GM10248 (cell line): ENCODE measurements at regions of chr12 and their contacts with region 1.

Region 1: DNA sequence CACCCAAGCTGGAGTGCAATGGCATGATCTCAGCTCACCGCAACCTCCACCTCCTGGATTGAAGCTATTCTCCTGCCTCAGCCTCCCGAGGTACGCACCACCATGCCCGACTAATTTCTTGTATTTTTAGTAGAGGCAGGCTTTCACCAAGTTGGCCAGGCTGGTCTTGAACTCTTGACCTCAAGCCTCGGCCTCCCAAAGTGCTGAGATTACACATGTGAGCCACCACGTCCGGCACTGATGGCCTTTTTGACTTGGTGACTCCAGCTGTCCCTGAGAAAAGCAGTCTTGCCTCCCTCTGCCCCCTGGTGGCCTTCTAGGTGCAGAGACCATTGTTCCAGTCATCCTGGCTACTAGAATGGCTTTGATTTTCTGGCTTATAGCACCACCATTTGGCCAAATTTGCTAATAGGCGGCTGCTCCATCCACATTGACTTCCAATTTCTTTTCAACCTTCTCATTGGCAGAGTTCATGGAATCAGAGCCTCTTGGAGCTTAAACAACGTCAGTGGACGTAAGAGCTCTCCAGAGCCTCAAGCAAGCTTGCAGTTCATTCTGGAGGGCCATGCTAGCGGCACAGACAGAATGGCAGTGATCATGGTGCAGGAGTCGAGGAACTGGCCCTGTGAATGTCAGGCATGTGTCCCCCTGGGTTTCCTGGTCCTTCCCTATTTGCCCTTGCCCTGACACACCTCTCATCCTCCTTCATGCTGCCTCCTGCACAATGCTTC is 25.4 kb upstream of the EIF4B start:
- DNase-seq: peak; percentile 84
- CTCF ChIP-seq: peak; percentile 98

Region 2: GRCh38 chr12:52156736-52157565 is 823.9 kb before region 1 on chr12:
- CTCF ChIA-PET with region 1: interaction called, 13 read pairs
- POLR2A ChIA-PET with region 1: no interaction called
- DNase-seq: peak; percentile 78
- CTCF ChIP-seq: peak; percentile 98

Region 3: DNA sequence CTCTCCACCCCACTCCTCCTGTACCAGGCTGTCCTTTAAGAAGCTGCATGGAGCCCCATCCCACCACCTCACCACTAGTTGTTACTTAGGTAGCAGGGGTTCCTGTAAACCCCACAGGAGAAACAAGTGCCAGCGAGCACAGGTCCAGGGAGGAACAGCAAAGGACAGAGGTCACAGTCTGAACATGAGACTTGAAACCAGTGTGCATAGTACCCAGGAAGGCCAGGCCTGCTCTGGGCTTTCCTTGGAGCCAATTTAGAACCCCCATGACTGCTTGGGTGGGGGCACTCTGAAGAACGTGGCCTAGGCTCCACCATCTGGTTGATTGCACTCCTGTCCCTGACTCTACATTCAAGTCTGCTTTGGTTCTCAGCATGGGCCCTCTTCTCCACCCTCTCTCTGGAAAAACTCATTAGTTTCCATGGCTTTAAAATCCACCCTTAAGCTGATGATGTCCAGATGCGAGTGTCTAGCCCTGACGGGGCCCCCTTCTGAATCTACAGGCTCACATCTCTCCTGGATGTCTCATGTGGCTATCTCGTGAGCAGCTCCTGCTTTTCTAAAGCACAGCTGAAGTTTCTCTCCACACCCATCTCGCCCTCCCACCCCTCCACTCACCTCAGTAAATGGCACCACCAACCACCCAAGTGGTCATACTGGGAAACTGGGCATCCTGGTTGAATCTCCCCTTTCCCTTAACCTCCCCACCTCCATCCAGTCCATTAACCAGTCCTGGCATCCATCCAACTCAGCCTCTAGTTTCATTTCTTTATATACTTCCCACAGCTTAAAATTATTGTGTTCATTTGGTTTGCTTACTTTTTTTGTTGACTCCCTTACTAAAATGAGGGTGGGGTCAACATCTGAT is 193.3 kb before region 1 on chr12:
- CTCF ChIA-PET with region 1: no interaction called
- POLR2A ChIA-PET with region 1: no interaction called
- DNase-seq: no peak
- CTCF ChIP-seq: no peak

Region 4: GRCh38 chr12:52879394-52880351 is 101.2 kb before region 1 on chr12:
- CTCF ChIA-PET with region 1: interaction called, 435 read pairs
- POLR2A ChIA-PET with region 1: no interaction called
- DNase-seq: peak; percentile 64
- CTCF ChIP-seq: peak; percentile 73

Region 5: GRCh38 chr12:52895061-52895887 is 85.6 kb before region 1 on chr12:
- CTCF ChIA-PET with region 1: interaction called, 25 read pairs
- POLR2A ChIA-PET with region 1: no interaction called
- DNase-seq: no peak
- CTCF ChIP-seq: no peak

Region 6: DNA sequence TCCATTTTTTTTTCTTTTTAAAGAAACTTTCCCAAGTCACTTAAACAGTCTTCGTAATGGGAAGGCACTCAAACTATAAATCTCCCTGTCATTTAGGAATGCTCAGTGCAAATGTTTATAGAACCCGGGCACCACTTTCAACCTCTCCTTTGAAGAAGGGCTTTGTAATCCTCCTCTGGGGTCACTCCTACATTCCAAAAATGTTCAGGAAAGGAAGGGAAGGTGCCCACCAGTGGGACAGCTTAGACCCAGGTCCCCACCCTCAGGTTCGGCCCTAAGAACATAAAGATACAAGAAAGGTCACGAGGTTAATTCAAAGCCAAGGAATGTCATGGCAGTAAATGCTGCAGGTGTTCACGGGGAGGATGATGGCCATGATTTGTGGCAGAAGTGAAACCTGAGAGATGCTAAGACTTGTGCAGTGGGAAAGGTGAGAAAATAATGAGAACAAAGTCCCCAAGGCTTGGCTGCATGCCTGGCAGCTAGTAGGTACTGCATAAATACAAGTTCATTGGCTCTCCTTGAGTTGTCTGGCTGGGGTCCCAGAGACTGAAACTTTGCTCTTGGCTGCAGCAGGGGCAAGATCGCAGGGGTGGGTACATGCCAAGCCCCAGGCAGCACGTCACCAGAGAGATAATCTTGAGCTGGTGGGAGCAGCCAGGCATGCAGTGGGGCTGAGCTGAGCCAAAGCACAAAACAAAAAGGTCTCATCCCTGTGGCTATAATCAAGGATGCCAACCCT is 10.9 kb before region 1 on chr12:
- CTCF ChIA-PET with region 1: interaction called, 33 read pairs
- POLR2A ChIA-PET with region 1: no interaction called
- DNase-seq: no peak
- CTCF ChIP-seq: no peak

Region 7: GRCh38 chr12:53005986-53006809 is 25.3 kb after region 1 on chr12 and contains the start of gene EIF4B:
- CTCF ChIA-PET with region 1: interaction called, 12 read pairs
- POLR2A ChIA-PET with region 1: no interaction called
- DNase-seq: peak; percentile 97
- CTCF ChIP-seq: no peak